ENCODE measurements at regions of chr6 and their contacts with region 1.

Region 1: GRCh38 chr6:16770701-16771569 is 9.7 kb upstream of the ATXN1 start:
- DNase-seq: peak; percentile 65
- H3K4me3 Mint-ChIP-seq: no peak overlapping the region
- H3K27ac Mint-ChIP-seq: no peak overlapping the region
- H3K4me1 Mint-ChIP-seq: peaks cover 46% of the 10 kb centered on the region
- H3K27me3 Mint-ChIP-seq: peaks cover 2% of the 10 kb centered on the region

Region 2: GRCh38 chr6:16238057-16238962 is 532.6 kb before region 1 on chr6 and contains the start of gene GMPR:
- intact Hi-C with region 1: loop called (anchors 10 kb)
- DNase-seq: peak; percentile 78
- H3K4me3 Mint-ChIP-seq: peak within 1 kb of the TSS; percentile 78
- H3K27ac Mint-ChIP-seq: no peak within 1 kb of the TSS
- H3K4me1 Mint-ChIP-seq: peaks cover 24% of the 10 kb centered on the region
- H3K27me3 Mint-ChIP-seq: peaks cover 51% of the 10 kb centered on the region
- total RNA-seq, gene GMPR: 1.0 and 1.1 TPM in 2 replicates